Activated T-helper 1 cell treated with anti-CD3 and anti-CD28 coated beads, Interleukin-12 subunit alpha, Interleukin-12 subunit beta, Interleukin-2, Interleukin-4 antibody, amounts not matched to agents 30 ng/mL and 10 ng/mL and 1 ng/mL, durations not matched to agents 14 hours and 24 hours and 36 hours (primary cell): ENCODE measurements at regions of chr1 and their contacts with region 1.

Region 1: GRCh38 chr1:78114034-78114956 is 68.5 kb downstream of the GIPC2 start:
- DNase-seq: peak; percentile 45
- H3K4me3 Mint-ChIP-seq: no peak overlapping the region
- H3K27ac Mint-ChIP-seq: no peak overlapping the region
- H3K4me1 Mint-ChIP-seq: no peaks in the 10 kb centered on the region
- H3K27me3 Mint-ChIP-seq: no peaks in the 10 kb centered on the region

Region 2: GRCh38 chr1:77759071-77760028 is 354.9 kb before region 1 on chr1 and contains the start of gene USP33:
- intact Hi-C with region 1: loop called (anchors 10 kb)
- DNase-seq: peak; percentile 89
- H3K4me3 Mint-ChIP-seq: peak within 1 kb of the TSS; percentile 92
- H3K27ac Mint-ChIP-seq: peak within 1 kb of the TSS; percentile 88
- H3K4me1 Mint-ChIP-seq: peaks cover 28% of the 10 kb centered on the region
- H3K27me3 Mint-ChIP-seq: peaks cover 2% of the 10 kb centered on the region
- total RNA-seq, gene USP33: 49.9 and 53.1 TPM in 2 replicates

Region 3: DNA sequence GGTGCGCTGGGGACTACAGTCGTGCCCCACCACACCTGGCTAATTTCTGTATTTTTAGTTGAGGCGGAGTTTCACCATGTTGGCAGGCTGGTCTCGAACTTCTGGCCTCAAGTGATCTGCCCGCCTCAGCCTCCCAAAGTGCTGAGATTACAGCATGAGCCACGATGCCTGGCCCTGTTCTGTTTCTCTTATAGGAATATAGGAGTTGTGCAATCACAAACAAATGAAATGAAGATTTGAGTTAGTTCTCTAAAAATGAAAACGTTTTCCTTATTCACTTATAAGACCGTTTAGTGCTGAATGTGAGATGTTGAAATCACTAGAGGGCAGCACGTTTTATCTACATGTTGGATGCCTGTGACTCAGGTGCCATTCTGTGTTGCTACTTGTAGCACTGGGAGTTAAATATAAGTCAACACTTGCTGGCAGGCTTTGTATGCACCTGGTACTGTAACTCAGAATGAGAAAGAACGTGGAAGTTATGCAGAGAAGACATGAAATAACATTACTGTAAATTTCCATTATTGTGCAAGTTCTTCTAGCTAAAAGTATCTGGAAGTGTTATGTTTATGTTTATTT is 289.1 kb before region 1 on chr1:
- intact Hi-C with region 1: loop called (anchors 1 kb)
- DNase-seq: no peak
- H3K4me3 Mint-ChIP-seq: no peak overlapping the region
- H3K27ac Mint-ChIP-seq: no peak overlapping the region
- H3K4me1 Mint-ChIP-seq: no peaks in the 10 kb centered on the region
- H3K27me3 Mint-ChIP-seq: no peaks in the 10 kb centered on the region

Region 4: DNA sequence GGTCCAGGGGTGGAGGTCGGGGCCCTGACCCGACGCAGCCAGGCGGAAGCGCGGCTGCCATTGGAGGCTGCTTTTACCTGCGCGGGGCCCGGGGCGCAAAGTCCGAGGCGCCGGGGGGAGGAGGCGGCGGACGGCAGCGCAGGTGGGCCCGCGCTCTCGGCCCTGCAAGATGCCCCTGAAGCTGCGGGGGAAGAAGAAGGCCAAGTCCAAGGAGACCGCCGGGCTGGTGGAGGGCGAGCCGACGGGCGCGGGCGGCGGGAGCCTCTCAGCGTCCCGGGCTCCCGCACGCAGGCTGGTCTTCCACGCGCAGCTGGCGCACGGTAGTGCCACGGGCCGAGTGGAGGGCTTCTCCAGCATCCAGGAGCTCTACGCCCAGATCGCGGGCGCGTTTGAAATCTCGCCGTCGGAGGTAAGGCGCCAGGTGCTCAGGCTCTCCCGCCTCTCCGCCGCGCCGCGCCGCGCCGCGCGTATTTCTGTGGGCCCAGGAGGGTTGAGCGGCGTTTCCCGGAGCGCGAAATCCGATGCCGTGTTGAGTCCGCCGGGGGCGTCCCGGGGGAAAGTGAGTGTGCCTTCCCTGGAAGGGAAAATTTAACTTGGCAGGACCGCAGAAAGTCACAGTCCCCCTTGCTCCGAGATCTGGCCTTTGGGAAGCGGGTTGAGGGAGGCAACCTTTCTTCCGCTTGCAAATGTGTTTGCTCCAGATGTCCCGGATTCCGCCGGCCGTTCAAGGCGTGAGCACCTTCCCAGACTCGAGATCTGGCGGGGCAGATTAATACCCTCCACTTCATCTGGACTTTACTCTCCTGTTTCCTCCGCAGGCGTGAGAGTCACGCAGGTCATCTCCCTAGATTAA is 68.1 kb before region 1 on chr1 and contains the start of gene GIPC2:
- intact Hi-C with region 1: loop called (anchors 5 kb)
- DNase-seq: peak; percentile 5
- H3K4me3 Mint-ChIP-seq: peak within 1 kb of the TSS; percentile 74
- H3K27ac Mint-ChIP-seq: no peak within 1 kb of the TSS
- H3K4me1 Mint-ChIP-seq: peaks cover 28% of the 10 kb centered on the region
- H3K27me3 Mint-ChIP-seq: peaks cover 54% of the 10 kb centered on the region
- total RNA-seq, gene GIPC2: 0.05 TPM in 1 of 2 replicates, not detected in the other